GM10248 (cell line): ENCODE measurements at regions of chr6 and their contacts with region 1.

Region 1: DNA sequence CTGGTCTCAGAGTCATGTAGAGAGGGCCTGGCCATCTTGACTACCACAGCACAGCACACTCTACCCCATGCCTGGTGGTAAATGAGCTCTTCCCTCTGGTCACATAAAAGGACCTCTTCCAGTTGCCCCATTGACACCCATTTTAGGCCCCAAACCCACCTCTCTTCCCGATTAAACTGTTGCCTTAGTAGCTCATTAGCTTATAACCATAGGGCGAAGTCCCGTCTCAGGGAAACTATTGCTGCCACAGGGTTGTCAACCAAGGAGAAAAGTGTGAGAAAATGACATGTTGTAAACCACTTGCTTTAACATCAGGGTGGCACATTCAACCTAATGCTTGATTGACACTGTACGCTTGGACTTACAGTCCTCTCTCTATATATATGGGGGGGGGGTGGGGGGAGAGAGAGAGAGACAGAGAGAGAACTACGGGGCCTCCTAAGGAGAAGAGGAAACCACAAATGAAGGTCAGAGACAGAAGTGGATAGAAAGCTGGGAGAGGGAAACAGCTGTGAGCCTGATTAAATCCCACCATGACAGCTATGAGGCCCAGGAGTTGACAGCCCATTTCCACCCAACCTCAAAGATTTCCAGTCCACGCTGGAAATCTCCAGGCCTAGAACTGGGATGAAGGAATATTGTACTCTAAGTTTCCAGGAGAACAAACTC is 14.9 kb upstream of the BTN1A1 start:
- DNase-seq: no peak
- CTCF ChIP-seq: no peak

Region 2: GRCh38 chr6:26445934-26446667 is 39.1 kb before region 1 on chr6:
- CTCF ChIA-PET with region 1: no interaction called
- POLR2A ChIA-PET with region 1: no interaction called
- DNase-seq: peak; percentile 50
- CTCF ChIP-seq: no peak

Region 3: GRCh38 chr6:26473758-26474438 is 11.3 kb before region 1 on chr6:
- CTCF ChIA-PET with region 1: interaction called, 13 read pairs
- POLR2A ChIA-PET with region 1: no interaction called
- DNase-seq: peak; percentile 81
- CTCF ChIP-seq: no peak

Region 4: DNA sequence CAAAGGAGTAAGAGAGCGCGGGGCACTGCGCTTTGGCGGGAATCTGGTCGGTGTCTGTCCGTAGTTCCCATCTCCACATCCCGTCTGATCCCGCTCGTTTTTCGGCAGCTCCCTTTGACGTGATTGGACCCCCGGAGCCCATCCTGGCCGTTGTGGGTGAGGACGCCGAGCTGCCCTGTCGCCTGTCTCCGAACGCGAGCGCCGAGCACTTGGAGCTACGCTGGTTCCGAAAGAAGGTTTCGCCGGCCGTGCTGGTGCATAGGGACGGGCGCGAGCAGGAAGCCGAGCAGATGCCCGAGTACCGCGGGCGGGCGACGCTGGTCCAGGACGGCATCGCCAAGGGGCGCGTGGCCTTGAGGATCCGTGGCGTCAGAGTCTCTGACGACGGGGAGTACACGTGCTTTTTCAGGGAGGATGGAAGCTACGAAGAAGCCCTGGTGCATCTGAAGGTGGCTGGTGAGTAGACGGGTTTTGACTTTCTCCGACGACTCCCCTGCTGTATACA is 16.3 kb after region 1 on chr6:
- CTCF ChIA-PET with region 1: interaction called, 10 read pairs
- POLR2A ChIA-PET with region 1: no interaction called
- DNase-seq: peak; percentile 31
- CTCF ChIP-seq: no peak